ENCODE measurements at regions of chr11 and their contacts with region 1.

Region 1: DNA sequence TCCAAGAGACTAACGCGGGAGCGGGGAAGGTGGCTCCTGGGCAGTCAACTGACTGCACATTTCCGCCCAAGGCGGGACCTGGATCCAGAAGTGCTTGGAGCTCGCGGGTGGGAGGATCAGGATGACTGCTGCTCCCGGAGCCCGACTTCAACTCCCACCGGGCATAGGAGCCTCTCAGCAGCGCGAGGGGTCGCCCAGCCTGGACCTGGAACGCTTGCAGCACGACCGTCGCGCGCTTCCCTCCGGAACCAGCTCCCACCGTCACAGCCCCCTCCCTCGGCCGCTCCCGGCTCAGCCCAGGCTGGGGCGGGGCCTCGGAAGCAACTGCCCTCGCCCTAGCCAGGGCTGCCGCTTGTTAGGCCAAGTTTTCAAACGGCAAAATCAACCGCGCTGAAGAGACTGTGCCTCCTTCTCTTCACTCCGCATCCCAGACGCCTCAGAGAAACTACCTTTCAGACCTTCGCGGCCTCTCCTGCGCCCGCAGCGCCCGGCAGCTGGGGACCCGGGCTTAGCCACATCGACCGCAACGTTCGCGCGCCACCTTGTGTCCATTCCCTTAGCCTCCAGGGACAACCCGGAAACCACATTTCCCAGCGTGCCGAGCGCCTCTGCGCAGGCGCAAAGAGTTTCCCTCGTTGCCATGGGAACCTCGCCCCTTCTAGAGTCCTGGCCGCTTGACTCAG is 14.0 kb downstream of the SSH3 start:
- DNase-seq: peak; percentile 94 to 97
- H3K4me3 ChIP-seq: peak overlapping the region; percentile 56 to 97 (median 74)
- H3K27ac ChIP-seq: peak overlapping the region; percentile 94
- H3K4me1 ChIP-seq: peaks cover 6 to 19% of the 10 kb centered on the region in 2 donors
- H3K27me3 ChIP-seq: no peaks in the 10 kb centered on the region
- CTCF ChIP-seq: peak; percentile 91 to 100 (median 99)
- POLR2A ChIP-seq: peak; percentile 43

Region 2: GRCh38 chr11:66161112-66161511 is 1156.2 kb before region 1 on chr11:
- intact Hi-C with region 1: loop called (anchors 10 kb)
- DNase-seq: no peak
- H3K4me3 ChIP-seq: no peak overlapping the region
- H3K27ac ChIP-seq: peak overlapping the region in 1 of 2 donors; percentile 25
- H3K4me1 ChIP-seq: no peaks in the 10 kb centered on the region
- H3K27me3 ChIP-seq: no peaks in the 10 kb centered on the region
- CTCF ChIP-seq: no peak
- POLR2A ChIP-seq: no peak

Region 3: GRCh38 chr11:67113231-67113721 is 204.1 kb before region 1 on chr11:
- intact Hi-C with region 1: no loop called
- DNase-seq: peak in 1 of 2 donors; percentile 27
- H3K4me3 ChIP-seq: no peak overlapping the region
- H3K27ac ChIP-seq: no peak overlapping the region
- H3K4me1 ChIP-seq: peaks cover 0 to 6% of the 10 kb centered on the region in 2 donors
- H3K27me3 ChIP-seq: no peaks in the 10 kb centered on the region
- CTCF ChIP-seq: no peak
- POLR2A ChIP-seq: no peak

Region 4: DNA sequence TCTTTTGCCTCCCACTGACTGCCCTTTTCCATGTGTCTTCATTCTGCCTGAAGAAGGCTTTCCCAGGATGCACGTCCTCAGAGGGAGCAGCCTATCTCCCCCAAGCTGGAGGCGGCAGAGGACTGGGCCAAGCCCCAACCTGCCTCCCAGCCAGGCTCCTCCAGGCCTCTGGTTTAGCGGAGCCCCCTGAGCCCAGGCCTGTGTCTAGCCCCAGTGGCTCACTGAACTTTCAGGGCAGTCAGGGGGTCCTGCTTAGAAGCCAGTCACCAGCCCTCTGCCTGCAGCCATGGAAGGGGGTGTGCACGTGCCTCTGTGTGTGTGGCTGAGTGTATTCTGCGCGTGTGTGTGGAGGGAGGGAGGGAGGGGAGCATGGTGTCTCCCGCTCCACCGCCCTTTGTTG is 61.5 kb before region 1 on chr11:
- intact Hi-C with region 1: loop called (anchors 2 kb)
- DNase-seq: peak in 1 of 2 donors; percentile 37
- H3K4me3 ChIP-seq: no peak overlapping the region
- H3K27ac ChIP-seq: peak overlapping the region in 1 of 2 donors; percentile 64
- H3K4me1 ChIP-seq: peaks cover 14 to 24% of the 10 kb centered on the region in 2 donors
- H3K27me3 ChIP-seq: no peaks in the 10 kb centered on the region
- CTCF ChIP-seq: no peak
- POLR2A ChIP-seq: no peak

Region 5: GRCh38 chr11:67262731-67263675 is 54.3 kb before region 1 on chr11:
- intact Hi-C with region 1: loop called (anchors 1 kb)
- DNase-seq: peak; percentile 73 to 81
- H3K4me3 ChIP-seq: peak overlapping the region in 1 of 3 donors; percentile 16
- H3K27ac ChIP-seq: peak overlapping the region; percentile 33 to 73
- H3K4me1 ChIP-seq: peaks cover 3 to 25% of the 10 kb centered on the region in 2 donors
- H3K27me3 ChIP-seq: no peaks in the 10 kb centered on the region
- CTCF ChIP-seq: peak; percentile 27 to 85 (median 74)
- POLR2A ChIP-seq: no peak

Region 6: GRCh38 chr11:67428052-67428914 is 110.9 kb after region 1 on chr11 and contains the start of gene RPS6KB2:
- intact Hi-C with region 1: no loop called
- DNase-seq: peak; percentile 98 to 99
- H3K4me3 ChIP-seq: peak within 1 kb of the TSS; percentile 76 to 98 (median 89)
- H3K27ac ChIP-seq: peak within 1 kb of the TSS; percentile 94 to 95
- H3K4me1 ChIP-seq: peaks cover 0 to 12% of the 10 kb centered on the region in 2 donors
- H3K27me3 ChIP-seq: no peaks in the 10 kb centered on the region
- CTCF ChIP-seq: peak in 1 of 3 donors; percentile 7
- POLR2A ChIP-seq: peak; percentile 91
- total RNA-seq, gene RPS6KB2: 28.0 to 41.6 (median 40.1) TPM

Measured in breast epithelium (tissue), 4 donors.